ENCODE measurements at regions of chr1 and their contacts with region 1.

Region 1: GRCh38 chr1:201254625-201255506 is 28.4 kb upstream of the PKP1 start:
- DNase-seq: peak; percentile 80
- H3K4me3 Mint-ChIP-seq: no peak overlapping the region
- H3K27ac Mint-ChIP-seq: no peak overlapping the region
- H3K4me1 Mint-ChIP-seq: no peaks in the 10 kb centered on the region
- H3K27me3 Mint-ChIP-seq: no peaks in the 10 kb centered on the region
- CTCF ChIP-seq: peak; percentile 100

Region 2: DNA sequence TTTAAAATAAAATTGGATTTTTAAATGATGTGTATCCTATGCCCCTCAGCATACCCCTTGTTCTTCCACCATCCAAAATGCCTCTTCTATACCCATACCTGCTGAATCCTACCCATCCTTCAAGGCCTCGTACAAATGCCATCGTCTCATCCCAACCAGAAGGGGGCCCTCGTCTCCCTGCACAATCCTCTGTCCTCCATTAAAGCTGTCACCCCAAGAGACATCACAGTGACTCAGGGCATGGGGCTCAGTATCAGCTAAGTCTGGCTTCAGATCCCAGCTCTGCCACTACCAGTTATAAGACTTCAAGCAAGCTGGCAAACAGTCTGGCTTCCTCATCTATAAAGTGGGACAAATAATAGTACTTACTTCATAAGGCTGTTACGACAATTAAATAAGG is 40.4 kb before region 1 on chr1:
- CTCF ChIA-PET with region 1: no interaction called
- POLR2A ChIA-PET with region 1: no interaction called
- intact Hi-C with region 1: no loop called
- DNase-seq: peak; percentile 46
- H3K4me3 Mint-ChIP-seq: no peak overlapping the region
- H3K27ac Mint-ChIP-seq: no peak overlapping the region
- H3K4me1 Mint-ChIP-seq: no peaks in the 10 kb centered on the region
- H3K27me3 Mint-ChIP-seq: peaks cover 40% of the 10 kb centered on the region
- CTCF ChIP-seq: peak; percentile 16

Region 3: GRCh38 chr1:201282931-201283829 is 28.3 kb after region 1 on chr1 and contains the start of gene PKP1:
- CTCF ChIA-PET with region 1: interaction called, 415 read pairs
- POLR2A ChIA-PET with region 1: interaction called, 3,819 read pairs
- intact Hi-C with region 1: no loop called
- DNase-seq: no peak
- H3K4me3 Mint-ChIP-seq: no peak within 1 kb of the TSS
- H3K27ac Mint-ChIP-seq: peak within 1 kb of the TSS; percentile 40
- H3K4me1 Mint-ChIP-seq: peaks cover 22% of the 10 kb centered on the region
- H3K27me3 Mint-ChIP-seq: no peaks in the 10 kb centered on the region
- CTCF ChIP-seq: no peak
- total RNA-seq, gene PKP1: 0.30 and 0.32 TPM in 2 replicates

Region 4: DNA sequence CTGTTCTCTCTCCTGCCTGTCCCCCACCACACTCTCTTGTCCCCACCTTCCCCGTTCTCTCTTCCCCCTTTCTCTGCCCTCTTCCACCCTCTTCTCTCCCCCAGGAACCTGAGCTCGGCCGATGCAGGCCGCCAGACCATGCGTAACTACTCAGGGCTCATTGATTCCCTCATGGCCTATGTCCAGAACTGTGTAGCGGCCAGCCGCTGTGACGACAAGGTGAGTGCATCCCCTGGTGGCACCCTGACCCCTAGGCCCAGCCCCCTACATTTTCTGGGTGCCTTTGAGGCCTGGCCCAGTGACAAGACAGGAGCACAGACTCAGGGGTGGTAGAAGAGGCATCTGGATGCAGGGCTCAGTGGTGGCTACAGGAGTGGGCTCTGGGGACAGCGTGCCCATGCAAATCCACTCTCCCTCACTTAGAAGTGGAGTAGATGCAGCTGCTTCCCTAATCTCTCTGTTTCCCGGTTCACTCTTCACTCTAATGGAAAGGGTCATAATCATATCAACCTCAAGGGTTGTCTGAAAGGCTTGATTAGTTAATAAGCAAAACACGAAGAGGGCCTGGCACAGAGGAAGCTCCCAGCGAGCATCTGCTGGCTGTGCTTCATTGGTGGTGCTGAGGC is 65.4 kb after region 1 on chr1:
- CTCF ChIA-PET with region 1: interaction called, 474 read pairs
- POLR2A ChIA-PET with region 1: interaction called, 3,819 read pairs
- intact Hi-C with region 1: no loop called
- DNase-seq: no peak
- H3K4me3 Mint-ChIP-seq: no peak overlapping the region
- H3K27ac Mint-ChIP-seq: no peak overlapping the region
- H3K4me1 Mint-ChIP-seq: peaks cover 24% of the 10 kb centered on the region
- H3K27me3 Mint-ChIP-seq: no peaks in the 10 kb centered on the region
- CTCF ChIP-seq: no peak

Region 5: DNA sequence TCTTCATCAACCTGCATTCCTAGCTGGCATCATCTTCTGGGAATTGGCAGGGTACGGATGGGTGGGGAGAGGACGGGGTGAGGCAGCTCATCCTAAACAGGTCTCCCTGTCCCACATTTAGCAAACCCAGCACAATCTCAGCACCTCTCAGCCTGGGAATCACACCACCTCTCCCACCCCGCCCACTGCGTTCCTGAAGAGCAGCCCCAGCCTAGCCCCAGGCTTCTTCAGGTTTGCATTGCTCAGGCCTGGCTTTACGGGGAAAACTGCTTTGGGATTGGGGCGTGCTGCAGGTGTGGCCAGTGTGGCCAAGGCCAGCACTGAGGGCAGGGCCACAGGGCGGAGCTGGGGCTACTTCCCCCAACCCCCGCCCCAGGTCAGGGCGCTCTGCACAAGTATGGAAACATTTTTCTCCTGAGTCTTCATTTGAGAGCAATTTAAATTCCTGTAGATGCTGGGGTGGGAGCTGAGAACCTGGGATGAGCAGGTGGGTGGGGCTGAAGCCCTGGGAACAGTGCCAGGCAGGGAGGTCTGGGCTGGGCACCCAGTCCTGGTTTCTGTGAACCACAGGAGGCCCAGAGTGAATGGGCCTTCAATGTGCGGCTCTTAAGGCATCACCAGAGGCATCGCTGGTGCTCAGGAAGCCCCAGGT is 98.4 kb after region 1 on chr1:
- CTCF ChIA-PET with region 1: interaction called, 550 read pairs
- POLR2A ChIA-PET with region 1: interaction called, 68 read pairs
- intact Hi-C with region 1: no loop called
- DNase-seq: peak; percentile 79
- H3K4me3 Mint-ChIP-seq: no peak overlapping the region
- H3K27ac Mint-ChIP-seq: peak overlapping the region; percentile 63
- H3K4me1 Mint-ChIP-seq: peaks cover 37% of the 10 kb centered on the region
- H3K27me3 Mint-ChIP-seq: peaks cover 10% of the 10 kb centered on the region
- CTCF ChIP-seq: no peak

Region 6: DNA sequence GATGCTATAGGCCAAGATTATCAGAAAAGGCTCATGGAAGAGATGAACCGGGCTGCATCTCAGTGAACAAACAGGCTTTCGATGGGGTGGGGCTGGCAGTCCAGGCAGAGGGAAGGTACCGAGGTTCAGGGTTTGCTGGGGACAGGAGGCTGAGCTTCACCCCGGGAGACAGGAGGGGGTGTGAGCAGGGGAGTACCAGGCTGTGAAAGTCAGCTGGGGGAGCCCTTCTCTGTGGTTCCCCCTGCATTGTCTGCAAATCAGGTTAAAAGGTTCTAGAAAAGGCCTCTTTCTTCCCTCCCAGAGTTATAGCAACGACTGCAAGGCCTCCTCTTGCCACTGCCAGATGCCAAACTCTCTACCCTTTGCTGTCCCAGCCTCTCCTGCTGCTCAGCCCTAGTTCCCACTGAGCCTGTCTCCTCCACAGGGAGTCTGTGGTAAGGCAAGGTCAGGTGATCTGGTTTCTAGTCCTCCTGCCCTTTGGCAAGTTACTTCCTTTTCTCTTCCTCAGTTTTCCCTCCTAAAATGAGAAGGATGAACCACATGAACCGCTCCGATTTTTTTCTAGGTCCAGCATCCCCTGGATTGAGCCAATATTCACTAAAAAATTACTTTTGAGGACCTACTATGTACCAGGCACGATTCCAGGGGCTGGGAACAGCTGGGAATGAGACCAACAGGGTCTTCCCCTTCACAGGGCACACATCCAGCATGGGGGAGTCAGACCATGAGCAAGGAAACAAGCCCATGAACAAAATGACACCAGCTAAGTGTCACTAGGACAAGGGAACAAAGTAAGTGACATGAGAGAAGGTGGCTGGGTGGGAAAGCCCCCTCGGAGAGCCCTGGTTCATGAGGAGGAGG is 137.0 kb after region 1 on chr1:
- CTCF ChIA-PET with region 1: interaction called, 21 read pairs
- POLR2A ChIA-PET with region 1: interaction called, 15 read pairs
- intact Hi-C with region 1: no loop called
- DNase-seq: no peak
- H3K4me3 Mint-ChIP-seq: no peak overlapping the region
- H3K27ac Mint-ChIP-seq: no peak overlapping the region
- H3K4me1 Mint-ChIP-seq: peaks cover 9% of the 10 kb centered on the region
- H3K27me3 Mint-ChIP-seq: no peaks in the 10 kb centered on the region
- CTCF ChIP-seq: no peak

Region 7: DNA sequence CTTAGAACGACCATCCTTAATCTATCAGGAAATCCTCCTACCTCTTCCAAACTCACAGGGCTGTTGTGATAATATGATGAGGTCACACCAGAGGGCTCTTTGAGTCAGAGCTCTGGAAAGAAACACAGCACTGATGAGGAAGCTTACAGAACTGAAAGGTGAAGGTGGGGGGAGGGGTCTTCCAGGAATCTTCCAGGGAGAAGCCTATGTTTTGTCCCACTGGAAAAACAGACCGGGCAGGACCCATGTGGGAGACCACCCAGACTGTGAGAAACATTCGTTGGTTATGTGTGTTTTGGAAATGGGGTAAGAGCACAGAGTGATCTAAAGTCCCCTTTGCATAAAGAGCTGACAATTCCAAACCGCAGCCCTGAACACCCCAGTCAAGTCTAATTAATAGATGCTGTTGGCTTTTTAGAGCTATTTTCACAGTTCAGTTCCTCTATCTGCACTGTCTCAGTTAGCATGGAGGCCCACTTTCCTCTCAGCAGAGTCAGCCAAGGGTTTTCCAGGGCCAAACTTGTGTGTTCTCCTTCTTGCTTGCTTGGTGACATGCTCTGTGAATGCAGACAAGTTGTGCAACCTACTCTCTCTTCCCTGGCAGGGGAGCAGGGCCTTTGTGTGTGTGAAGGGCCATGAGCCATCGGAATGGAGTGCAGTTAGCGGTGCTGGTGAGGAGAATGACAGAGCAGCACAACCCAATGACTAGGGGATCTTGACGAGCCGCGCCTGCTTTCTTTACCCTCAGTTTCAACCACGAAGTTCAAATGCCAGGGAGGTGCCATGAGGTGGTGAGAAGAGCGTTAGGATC is 201.8 kb after region 1 on chr1:
- CTCF ChIA-PET with region 1: no interaction called
- POLR2A ChIA-PET with region 1: interaction called, 15 read pairs
- intact Hi-C with region 1: no loop called
- DNase-seq: peak; percentile 97
- H3K4me3 Mint-ChIP-seq: no peak overlapping the region
- H3K27ac Mint-ChIP-seq: peak overlapping the region; percentile 67
- H3K4me1 Mint-ChIP-seq: peaks cover 49% of the 10 kb centered on the region
- H3K27me3 Mint-ChIP-seq: no peaks in the 10 kb centered on the region
- CTCF ChIP-seq: no peak

Measured in MCF 10A (cell line).